ENCODE measurements at regions of chr15 and their contacts with region 1.

Region 1: DNA sequence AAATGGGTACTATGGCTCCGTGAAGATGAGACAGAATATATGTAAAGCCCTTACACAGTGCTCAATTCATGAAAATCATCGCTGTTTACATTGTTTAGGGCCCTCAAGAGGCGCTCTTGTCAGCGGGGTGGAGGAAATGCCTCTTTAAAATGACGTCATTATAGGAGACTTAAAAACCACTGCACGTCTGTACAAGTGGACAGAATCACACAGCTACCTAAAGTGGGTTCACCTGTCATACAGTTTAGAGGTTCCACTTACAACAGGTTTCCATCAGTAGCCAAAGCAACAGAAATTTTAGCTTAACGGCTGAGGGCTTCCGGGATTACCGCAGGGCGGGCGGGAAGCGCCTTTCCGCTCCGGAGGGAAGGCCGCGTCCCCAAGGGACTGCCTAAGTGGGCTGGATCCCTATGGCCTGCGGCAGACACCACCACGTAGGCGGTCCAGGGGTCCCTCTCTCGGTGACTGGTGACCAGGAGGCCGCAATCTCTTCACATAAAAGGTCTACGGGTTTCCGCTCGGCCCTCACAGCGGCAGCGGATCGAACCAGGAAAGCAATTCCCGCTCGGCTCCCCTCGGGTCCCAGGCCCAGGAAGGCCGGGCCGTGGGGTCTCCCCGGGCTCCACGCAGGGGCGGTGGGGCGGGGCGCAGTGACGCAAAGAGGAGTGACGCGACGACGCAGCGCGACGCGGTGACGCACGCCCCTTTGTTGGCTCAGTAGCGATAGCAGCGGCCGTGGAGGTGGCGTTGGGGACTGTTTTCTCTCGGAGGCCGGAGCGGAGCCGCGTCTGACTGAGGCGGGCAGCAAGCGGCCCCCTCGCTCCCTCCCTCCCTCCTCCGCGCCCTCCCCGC is at the start of gene ARIH1:
- DNase-seq: peak; percentile 95
- H3K4me3 Mint-ChIP-seq: peak within 1 kb of the TSS; percentile 95
- H3K27ac Mint-ChIP-seq: peak within 1 kb of the TSS; percentile 99
- H3K4me1 Mint-ChIP-seq: peaks cover 33% of the 10 kb centered on the region
- H3K27me3 Mint-ChIP-seq: no peaks in the 10 kb centered on the region
- total RNA-seq, gene ARIH1: 140 and 144 TPM in 2 replicates

Region 2: DNA sequence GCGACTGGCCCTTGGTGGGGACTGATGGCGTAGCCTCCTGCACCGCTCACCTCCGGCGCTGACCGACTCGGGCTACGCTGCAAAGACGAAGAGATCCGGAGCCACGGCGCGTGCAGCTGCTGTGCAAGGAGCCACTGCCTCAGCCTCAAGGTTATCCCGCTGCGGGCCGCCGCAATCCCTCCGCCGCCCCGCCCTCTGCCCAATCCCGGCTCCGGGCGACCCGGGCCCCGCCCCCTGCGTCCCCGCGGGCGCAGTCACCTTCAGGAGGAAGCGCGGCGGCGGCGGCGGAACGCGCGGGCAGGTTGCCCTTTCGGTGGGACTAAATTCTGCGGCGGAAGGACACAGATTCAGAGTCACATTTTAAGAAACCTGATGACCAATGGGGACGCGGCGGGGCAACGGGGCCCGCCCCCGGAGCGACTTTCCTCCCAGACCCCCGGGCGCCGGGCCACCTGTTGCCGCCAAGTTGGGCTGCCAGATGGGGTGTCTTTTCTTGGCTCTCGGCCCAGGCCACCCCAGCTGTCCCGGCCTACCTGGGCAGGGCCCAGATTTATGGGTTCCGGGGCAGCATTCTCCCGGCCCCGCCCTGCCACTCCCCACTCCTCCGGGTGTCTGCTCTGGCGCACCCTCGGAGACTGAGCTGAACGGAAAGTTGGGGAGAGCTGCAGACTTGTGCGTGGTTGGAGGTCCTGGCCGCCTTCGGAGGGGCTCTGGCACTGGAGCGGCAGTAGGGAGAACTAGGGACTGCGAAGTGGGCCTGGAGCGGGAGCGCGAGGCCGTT is 242.6 kb before region 1 on chr15 and contains the start of gene PKM:
- intact Hi-C with region 1: loop called (anchors 1 kb)
- DNase-seq: peak; percentile 95
- H3K4me3 Mint-ChIP-seq: peak within 1 kb of the TSS; percentile 98
- H3K27ac Mint-ChIP-seq: peak within 1 kb of the TSS; percentile 100
- H3K4me1 Mint-ChIP-seq: peaks cover 40% of the 10 kb centered on the region
- H3K27me3 Mint-ChIP-seq: no peaks in the 10 kb centered on the region
- total RNA-seq, gene PKM: 2,409 and 2,442 TPM in 2 replicates

Region 3: GRCh38 chr15:72319985-72320671 is 153.7 kb before region 1 on chr15 and contains the start of gene CELF6:
- intact Hi-C with region 1: loop called (anchors 1 kb)
- DNase-seq: peak; percentile 73
- H3K4me3 Mint-ChIP-seq: peak within 1 kb of the TSS; percentile 84
- H3K27ac Mint-ChIP-seq: peak within 1 kb of the TSS; percentile 60
- H3K4me1 Mint-ChIP-seq: peaks cover 19% of the 10 kb centered on the region
- H3K27me3 Mint-ChIP-seq: peaks cover 21% of the 10 kb centered on the region
- total RNA-seq, gene CELF6: 0.26 and 0.27 TPM in 2 replicates

Region 4: DNA sequence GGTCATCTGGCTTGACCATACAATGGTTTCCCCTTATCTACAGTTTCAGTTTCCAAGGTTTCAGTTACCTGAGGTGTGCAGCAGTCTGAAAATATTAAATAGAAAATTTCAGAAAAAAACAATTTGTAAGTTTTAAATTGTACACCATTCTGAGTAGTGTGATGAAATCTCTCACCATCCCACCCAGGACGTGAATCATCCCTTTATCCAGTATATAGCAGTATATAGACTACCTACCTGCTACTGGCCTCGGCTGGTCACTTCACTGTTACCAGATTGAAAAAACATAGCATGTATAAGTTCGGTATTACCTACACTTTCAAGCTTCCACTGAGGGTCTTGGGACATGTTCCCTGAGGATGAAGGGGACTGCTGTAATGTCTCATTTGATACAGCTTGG is 12.3 kb after region 1 on chr15:
- intact Hi-C with region 1: loop called (anchors 1 kb)
- DNase-seq: no peak
- H3K4me3 Mint-ChIP-seq: no peak overlapping the region
- H3K27ac Mint-ChIP-seq: no peak overlapping the region
- H3K4me1 Mint-ChIP-seq: peaks cover 26% of the 10 kb centered on the region
- H3K27me3 Mint-ChIP-seq: no peaks in the 10 kb centered on the region

Region 5: DNA sequence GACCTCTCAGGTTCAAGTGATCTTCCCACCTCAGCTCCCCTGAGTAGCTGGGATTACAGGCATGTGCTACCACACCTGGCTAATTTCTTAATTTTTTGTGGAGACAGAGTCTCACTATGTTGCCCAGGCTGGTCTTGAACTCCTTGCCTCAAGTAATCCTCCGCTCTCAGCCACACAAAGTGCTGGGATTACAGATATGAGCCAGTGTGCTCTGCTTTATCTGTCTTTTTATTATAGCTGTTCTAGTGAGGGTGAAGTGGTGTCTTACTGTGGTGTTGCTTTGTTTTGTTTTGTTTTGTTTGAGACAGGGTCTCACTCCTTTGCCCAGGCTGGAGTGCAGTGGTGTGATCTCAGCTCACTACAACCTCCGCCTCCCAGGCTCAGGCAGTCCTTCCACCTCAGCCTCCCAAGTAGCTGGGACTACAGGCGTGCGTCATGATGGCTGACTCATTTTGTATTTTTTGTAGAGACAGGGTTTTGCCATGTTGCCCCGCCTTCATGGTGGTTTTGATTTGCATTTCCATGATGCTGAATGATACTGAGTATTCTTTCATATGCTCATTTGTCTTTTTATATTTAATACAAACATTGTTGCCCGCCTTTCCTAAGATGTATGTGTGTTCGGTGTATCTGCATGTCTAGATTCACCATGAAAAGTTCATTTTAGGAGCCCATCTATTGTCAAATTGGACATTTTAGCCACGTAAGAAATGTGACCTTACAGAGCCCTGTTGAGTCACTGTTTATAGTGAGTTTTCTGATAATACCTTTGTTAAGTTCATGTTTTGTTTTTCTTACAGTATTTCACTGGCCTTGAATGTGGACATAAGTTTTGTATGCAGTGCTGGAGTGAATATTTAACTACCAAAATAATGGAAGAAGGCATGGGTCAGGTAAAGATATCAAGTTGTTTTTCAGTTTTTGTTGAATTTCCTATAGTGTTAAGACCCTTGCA is 80.9 kb after region 1 on chr15:
- intact Hi-C with region 1: loop called (anchors 2 kb)
- DNase-seq: no peak
- H3K4me3 Mint-ChIP-seq: no peak overlapping the region
- H3K27ac Mint-ChIP-seq: peak overlapping the region; percentile 41
- H3K4me1 Mint-ChIP-seq: peaks cover 17% of the 10 kb centered on the region
- H3K27me3 Mint-ChIP-seq: no peaks in the 10 kb centered on the region

Region 6: GRCh38 chr15:73051811-73052678 is 578.2 kb after region 1 on chr15 and contains the start of gene NEO1:
- intact Hi-C with region 1: loop called (anchors 5 kb)
- DNase-seq: peak; percentile 74
- H3K4me3 Mint-ChIP-seq: peak within 1 kb of the TSS; percentile 82
- H3K27ac Mint-ChIP-seq: peak within 1 kb of the TSS; percentile 64
- H3K4me1 Mint-ChIP-seq: peaks cover 8% of the 10 kb centered on the region
- H3K27me3 Mint-ChIP-seq: peaks cover 27% of the 10 kb centered on the region
- total RNA-seq, gene NEO1: 5.6 and 9.1 TPM in 2 replicates